AG04449 (cell line): ENCODE measurements at regions of chr9 and their contacts with region 1.

Region 1: DNA sequence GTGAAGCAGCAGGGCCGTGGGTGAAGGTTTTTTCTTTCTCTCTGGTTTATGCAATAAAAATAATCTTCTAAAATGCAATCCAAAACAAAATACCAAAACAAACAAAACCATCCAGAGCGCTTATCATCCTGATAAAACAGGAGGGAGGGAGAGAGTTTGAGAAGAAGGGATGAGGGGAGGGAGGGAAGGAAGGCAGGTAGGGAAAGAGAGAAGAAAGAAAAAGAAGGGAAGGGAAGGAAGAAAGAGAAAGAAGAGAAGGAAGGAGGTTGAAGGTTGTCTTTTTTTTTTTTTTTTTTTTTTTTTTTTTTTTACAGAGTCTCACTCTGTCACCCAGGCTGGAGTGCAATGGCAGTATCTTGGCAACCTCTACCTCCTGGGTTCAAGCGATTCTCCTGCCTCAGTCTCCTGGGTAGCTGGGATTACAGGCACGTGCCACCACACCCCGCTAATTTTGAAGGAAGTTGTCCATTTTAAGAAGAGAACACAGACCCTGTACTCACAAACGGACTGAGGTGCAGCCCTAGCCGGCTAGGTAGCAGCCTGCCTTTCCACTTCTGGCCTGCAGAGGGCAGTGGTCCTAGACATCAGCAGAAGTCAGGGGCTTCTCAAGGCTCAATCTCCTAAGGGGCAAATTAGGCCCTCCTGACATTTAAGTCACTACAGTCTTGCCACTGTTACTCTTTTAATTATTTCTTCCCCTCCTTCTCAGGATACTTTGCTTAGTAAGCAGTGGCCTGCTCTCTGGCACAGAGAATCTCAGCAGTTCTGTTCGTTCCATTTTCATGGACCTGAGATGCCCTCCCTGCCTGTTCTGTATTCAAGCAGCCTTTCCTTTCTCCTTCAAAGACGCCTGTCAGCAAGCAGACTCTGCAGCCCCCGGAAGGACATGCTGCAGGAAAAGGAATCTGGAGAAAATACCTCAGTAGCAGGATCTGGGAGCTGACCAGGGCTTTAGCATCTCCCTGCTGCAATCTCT is 76.4 kb downstream of the EPB41L4B start:
- DNase-seq: no peak
- H3K4me3 ChIP-seq: no peak overlapping the region
- CTCF ChIP-seq: peak; percentile 90

Region 2: DNA sequence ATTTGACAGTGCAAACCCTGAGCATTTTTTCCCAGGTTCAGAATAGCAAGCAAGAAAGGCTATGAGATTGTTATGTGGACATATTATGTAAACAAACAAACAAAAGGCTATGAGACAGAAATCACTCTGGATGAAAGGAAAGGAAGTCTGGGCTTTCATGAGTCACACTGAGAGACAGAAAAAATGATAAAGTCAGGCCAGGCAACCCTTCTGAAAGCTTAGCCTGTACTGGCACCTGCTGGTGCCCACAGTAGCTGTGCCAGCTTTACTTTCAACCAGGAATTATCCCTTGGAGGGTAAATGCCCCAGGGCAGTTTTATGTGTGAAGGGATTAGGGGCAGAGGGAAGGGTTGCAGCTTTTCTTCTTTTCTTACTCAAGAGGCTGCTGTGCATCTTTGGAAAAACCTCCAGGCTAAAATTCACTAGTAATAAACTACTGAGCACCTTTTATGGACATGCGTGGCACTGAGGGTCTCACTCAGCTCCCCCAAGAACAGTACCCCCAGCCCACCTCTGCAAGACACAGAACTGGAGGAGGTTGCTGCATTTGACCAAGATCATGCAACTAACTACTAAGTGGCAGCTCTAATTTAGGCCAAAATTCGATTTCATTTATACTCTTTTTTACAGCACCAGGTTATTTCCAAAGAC is 430.4 kb before region 1 on chr9:
- CTCF ChIA-PET with region 1: no interaction called
- POLR2A ChIA-PET with region 1: no interaction called
- DNase-seq: peak; percentile 10
- H3K4me3 ChIP-seq: no peak overlapping the region
- CTCF ChIP-seq: peak; percentile 13

Region 3: GRCh38 chr9:109232449-109233237 is 11.8 kb before region 1 on chr9:
- CTCF ChIA-PET with region 1: interaction called, 35 read pairs
- POLR2A ChIA-PET with region 1: no interaction called
- DNase-seq: peak; percentile 37
- H3K4me3 ChIP-seq: no peak overlapping the region
- CTCF ChIP-seq: no peak